SK-N-SH (cell line): ENCODE measurements at regions of chrX and their contacts with region 1.

Region 1: DNA sequence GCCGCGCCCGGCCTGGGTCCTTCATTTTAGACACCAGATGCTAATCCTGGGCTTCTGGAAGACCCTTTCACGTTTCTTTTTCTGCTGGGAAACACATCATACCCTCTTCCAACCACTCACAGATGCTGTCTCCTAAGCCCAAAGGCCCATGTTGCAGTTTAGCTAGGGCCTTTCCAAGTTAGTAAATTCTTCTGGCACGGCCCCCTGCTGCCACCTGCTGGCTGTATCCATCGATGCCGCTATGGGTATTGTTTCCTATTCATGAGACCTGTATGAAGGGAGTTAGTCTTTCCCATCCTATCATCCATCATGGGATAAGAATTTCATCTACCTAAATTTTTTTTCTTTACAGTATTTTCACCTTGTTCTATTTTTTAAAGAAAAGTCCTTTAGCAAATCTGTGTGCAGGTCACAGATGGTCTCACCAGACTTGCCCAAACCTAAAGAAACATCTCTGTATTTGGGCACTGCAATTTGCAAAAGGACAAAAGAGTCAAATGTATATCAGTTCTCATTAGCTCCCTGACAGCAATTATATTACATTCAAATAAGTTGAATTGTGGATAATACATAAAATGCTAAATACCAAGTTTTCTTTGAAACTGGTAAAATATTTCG is 37.8 kb upstream of the SLC9A7 start:
- DNase-seq: peak; percentile 60
- H3K4me3 ChIP-seq: no peak overlapping the region
- H3K27ac ChIP-seq: no peak overlapping the region
- H3K4me1 ChIP-seq: peaks cover 0 to 14% of the 10 kb centered on the region in 2 experiments; a peak in 2 of 4 replicates
- H3K27me3 ChIP-seq: no peaks in the 10 kb centered on the region
- CTCF ChIP-seq: peak; percentile 94
- EP300 ChIP-seq: no peak
- RAD21 ChIP-seq: peak; percentile 88

Region 2: DNA sequence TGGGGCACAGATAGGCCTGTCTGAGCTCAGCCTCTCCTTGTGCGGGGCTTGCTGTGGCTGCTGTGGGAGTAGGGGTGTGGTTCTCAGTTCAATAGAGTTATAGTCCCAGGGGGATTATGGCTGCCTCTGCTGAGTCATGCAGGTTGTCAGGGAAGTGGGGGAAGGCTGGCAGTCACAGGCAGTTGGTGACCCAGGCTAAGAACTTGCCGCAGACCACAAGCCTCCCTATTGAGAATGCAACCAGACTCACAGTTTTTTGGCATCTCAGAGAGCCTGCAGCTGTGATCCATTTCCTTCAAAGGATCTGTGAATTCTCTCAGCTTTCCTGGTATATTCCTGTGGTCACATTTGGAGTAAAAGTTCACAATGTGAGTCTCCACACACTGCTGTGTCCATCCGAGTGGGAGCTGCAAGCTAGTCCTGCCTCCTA is 616.4 kb before region 1 on chrX:
- CTCF ChIA-PET with region 1: no interaction called
- POLR2A ChIA-PET with region 1: no interaction called
- DNase-seq: no peak
- H3K4me3 ChIP-seq: no peak overlapping the region
- H3K27ac ChIP-seq: peak overlapping the region; percentile 54 to 60; a peak in 3 of 4 replicates
- H3K4me1 ChIP-seq: no peaks in the 10 kb centered on the region; a peak in 2 of 4 replicates
- H3K27me3 ChIP-seq: no peaks in the 10 kb centered on the region
- CTCF ChIP-seq: no peak
- EP300 ChIP-seq: peak; percentile 28 to 76; a peak in 2 of 4 replicates
- RAD21 ChIP-seq: no peak

Region 3: DNA sequence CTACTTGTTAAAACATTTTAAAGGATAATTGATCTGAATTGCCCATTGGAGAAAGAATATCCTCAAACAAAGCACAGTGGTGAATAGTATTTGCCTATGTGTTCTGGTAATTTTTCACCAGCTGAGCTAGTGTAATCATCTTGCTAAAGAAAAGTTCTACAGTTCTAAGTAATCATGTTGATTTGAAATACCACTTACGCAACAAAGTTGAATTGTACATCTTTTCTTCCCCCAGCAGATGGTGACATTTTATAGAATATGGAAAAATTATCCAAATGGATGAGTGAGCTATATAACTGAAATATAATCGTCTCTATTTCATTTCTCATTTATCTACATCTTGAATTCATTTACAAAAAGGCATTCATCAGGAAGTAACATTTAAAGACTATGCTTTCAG is 241.7 kb before region 1 on chrX:
- CTCF ChIA-PET with region 1: interaction called, 10 read pairs
- POLR2A ChIA-PET with region 1: no interaction called
- DNase-seq: no peak
- H3K4me3 ChIP-seq: no peak overlapping the region
- H3K27ac ChIP-seq: no peak overlapping the region
- H3K4me1 ChIP-seq: no peaks in the 10 kb centered on the region
- H3K27me3 ChIP-seq: peaks cover 12% of the 10 kb centered on the region; the same call in 1 of the 2 replicates
- CTCF ChIP-seq: peak; percentile 66
- EP300 ChIP-seq: no peak
- RAD21 ChIP-seq: peak; percentile 67

Region 4: GRCh38 chrX:46758906-46759644 is 37.6 kb before region 1 on chrX and contains the start of gene SLC9A7:
- CTCF ChIA-PET with region 1: interaction called, 26 read pairs
- POLR2A ChIA-PET with region 1: no interaction called
- DNase-seq: peak; percentile 80
- H3K4me3 ChIP-seq: peak within 1 kb of the TSS; percentile 60 to 64
- H3K27ac ChIP-seq: peak within 1 kb of the TSS in 1 of 2 experiments; percentile 33; a peak in 2 of 4 replicates
- H3K4me1 ChIP-seq: peaks cover 6 to 9% of the 10 kb centered on the region in 2 experiments; a peak in 2 of 4 replicates
- H3K27me3 ChIP-seq: peaks cover 17% of the 10 kb centered on the region; the same call in 1 of the 2 replicates
- CTCF ChIP-seq: peak; percentile 77
- EP300 ChIP-seq: no peak
- RAD21 ChIP-seq: peak; percentile 78
- polyA plus RNA-seq, gene SLC9A7: 10.3 and 10.5 TPM in 2 replicates

Region 5: GRCh38 chrX:46782034-46782433 is 14.6 kb before region 1 on chrX:
- CTCF ChIA-PET with region 1: interaction called, 11 read pairs
- POLR2A ChIA-PET with region 1: no interaction called
- DNase-seq: no peak
- H3K4me3 ChIP-seq: no peak overlapping the region
- H3K27ac ChIP-seq: no peak overlapping the region
- H3K4me1 ChIP-seq: no peaks in the 10 kb centered on the region
- H3K27me3 ChIP-seq: peaks cover 7% of the 10 kb centered on the region; the same call in 1 of the 2 replicates
- CTCF ChIP-seq: no peak
- EP300 ChIP-seq: no peak
- RAD21 ChIP-seq: no peak